Endothelial cell of umbilical vein (primary cell): ENCODE measurements at regions of chr12 and their contacts with region 1.

Region 1: DNA sequence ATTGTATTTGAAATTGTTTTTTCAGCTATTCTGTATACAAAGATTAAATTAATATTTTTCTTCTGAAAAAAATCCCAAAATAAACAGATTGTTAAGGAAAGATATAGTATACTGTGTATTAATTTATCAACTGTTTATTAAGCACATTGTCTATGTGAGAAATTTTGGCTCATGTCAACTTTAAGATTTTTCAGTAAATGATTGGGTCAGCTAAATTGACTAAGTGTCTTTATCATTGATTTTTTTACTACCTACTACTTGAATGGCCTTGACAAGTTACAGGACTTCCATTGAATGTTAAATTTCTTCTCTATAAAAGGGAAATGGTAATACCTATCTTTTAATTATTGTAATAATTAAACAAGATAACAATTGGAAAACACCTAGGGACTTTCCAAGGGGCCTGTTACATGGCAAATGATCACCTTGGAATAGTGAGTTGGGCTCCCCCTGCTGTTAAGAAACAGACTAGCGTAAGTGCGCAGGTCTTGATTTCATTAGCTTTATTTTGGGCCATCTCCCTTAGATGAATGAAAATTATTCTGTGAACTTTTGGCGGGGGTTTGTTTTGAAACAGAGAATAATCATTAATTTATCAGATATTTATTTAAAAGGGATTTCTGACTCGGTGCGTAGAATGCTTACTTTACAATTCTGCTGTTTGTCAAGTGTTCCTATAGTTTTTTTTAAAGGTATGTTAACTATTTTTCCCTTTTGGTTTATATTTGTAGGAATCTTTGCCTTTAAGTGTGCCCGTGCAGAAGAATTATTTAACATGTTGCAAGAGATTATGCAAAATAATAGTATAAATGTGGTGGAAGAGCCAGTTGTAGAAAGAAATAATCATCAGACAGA is 14.5 kb upstream of the CCT2 start:
- DNase-seq: peak; percentile 70
- H3K4me3 ChIP-seq: no peak overlapping the region
- H3K27ac ChIP-seq: no peak overlapping the region
- H3K4me1 ChIP-seq: no peaks in the 10 kb centered on the region
- H3K27me3 ChIP-seq: no peaks in the 10 kb centered on the region
- CTCF ChIP-seq: peak; percentile 64 to 72
- POLR2A ChIP-seq: no peak

Region 2: DNA sequence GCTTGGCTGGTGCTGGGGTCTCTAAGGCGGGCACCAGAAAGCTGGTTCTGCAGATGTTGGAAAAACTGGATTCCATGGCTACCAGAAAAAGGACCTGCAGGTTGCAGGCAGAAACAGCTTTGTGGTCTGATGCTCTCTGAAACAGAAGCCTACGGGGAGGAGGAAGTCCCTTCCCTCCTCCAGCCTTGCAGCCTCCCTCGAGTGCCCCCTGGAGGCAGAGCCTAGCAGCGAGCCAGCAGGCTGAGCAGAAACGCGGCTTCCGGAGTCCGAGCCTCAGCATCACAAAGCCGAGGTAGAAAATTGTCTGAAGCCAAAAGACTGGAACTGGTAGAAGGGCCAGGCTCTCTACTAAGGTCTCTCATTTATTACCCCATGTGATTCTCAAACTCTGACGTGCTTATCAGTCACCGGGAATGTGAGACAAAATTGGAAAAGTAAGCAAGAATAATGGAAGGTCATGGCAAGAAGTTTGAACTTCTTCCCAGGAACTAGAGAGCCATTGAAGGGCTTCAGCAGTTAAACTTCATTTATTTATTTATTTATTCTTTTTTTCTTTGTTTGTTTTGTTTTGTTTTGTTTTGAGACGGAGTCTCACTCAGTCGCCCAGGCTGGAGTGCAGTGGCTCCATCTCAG is 413.6 kb before region 1 on chr12:
- CTCF ChIA-PET with region 1: interaction called, 13 read pairs
- POLR2A ChIA-PET with region 1: no interaction called
- dilution Hi-C with region 1: no loop called
- intact Hi-C with region 1: loop called (anchors 5 kb)
- DNase-seq: peak; percentile 67
- H3K4me3 ChIP-seq: no peak overlapping the region
- H3K27ac ChIP-seq: no peak overlapping the region
- H3K4me1 ChIP-seq: no peaks in the 10 kb centered on the region
- H3K27me3 ChIP-seq: peaks cover 1 to 2% of the 10 kb centered on the region in 2 experiments
- CTCF ChIP-seq: peak; percentile 96 to 99
- POLR2A ChIP-seq: no peak

Region 3: DNA sequence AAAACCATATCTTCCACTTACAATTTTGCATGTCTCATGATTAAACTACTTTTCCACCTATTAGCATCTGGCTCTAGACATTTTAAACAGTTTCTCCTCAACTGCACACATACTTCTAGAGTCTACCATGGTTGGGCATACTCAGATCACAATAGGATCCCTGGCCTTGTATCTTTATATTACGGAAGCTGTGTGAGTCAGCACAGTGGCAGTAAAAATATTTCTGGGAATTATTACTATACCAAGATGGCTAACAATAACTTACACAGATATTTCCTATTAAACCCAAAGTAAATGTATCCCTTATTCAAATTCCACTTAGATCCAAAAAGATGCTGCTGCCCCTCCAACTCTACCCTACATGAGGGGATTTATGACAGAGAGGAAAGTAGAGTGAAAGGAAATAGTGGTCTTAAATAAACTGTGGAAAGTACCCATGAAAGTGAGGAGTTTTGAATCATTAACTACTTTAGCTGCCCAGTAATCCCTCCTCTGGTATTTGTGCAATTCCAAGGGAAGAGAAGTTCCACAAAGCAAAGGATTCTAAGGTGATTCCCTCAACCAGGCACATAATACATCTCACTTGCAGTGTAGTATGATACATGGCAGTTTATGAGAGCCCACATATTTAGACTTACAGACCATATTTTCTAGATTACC is 345.4 kb before region 1 on chr12:
- CTCF ChIA-PET with region 1: no interaction called
- POLR2A ChIA-PET with region 1: no interaction called
- dilution Hi-C with region 1: no loop called
- intact Hi-C with region 1: no loop called
- DNase-seq: no peak
- H3K4me3 ChIP-seq: no peak overlapping the region
- H3K27ac ChIP-seq: no peak overlapping the region
- H3K4me1 ChIP-seq: no peaks in the 10 kb centered on the region
- H3K27me3 ChIP-seq: peaks cover 1 to 11% of the 10 kb centered on the region in 2 experiments
- CTCF ChIP-seq: no peak
- POLR2A ChIP-seq: no peak

Region 4: DNA sequence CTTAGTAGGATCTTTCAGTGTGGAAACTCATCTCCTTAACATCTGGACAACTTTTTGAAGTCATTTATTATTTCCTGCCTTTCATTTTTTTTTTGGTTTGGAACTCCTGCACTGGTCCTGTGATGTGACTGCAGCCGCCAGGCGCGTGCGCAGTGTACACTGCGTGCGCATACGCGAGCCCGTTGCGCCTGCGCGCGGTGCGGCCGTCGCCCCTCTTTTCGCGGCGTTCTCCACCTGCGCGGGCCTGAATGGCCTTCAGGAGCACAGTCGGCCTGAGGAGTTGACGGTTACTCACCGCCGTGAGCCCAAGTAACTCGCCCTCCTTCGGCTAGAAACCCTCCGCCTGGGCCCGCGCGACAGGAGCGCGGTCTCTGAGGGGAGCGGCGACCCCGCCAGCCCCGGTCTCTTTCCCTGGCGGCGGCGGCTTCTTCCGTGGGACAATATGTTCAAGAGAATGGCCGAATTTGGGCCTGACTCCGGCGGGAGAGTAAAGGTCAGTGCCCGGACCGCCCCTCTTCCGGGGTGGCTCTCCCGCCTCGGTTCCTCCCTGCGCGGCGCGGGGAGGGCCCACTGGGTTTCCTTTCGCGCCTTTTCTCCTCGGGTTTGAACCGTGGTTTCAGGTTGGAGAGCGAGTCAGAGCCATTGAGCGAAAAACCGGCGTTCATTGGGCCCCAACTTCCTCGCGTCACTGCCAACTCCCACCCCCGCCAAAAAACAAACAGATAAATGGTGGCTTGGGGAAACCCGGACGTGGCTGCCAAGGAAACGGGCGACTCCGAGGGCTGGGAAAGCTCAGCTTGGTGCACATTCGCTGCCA is 211.0 kb before region 1 on chr12 and contains the start of gene YEATS4:
- CTCF ChIA-PET with region 1: interaction called, 107 read pairs
- POLR2A ChIA-PET with region 1: no interaction called
- dilution Hi-C with region 1: no loop called
- intact Hi-C with region 1: loop called (anchors 1 kb)
- DNase-seq: peak; percentile 92
- H3K4me3 ChIP-seq: peak within 1 kb of the TSS; percentile 6 to 89 (median 65)
- H3K27ac ChIP-seq: peak within 1 kb of the TSS; percentile 69
- H3K4me1 ChIP-seq: peaks cover 7% of the 10 kb centered on the region
- H3K27me3 ChIP-seq: no peaks in the 10 kb centered on the region
- CTCF ChIP-seq: no peak
- POLR2A ChIP-seq: peak; percentile 68
- total RNA-seq, gene YEATS4: 16.5 and 16.7 TPM in 2 replicates

Region 5: DNA sequence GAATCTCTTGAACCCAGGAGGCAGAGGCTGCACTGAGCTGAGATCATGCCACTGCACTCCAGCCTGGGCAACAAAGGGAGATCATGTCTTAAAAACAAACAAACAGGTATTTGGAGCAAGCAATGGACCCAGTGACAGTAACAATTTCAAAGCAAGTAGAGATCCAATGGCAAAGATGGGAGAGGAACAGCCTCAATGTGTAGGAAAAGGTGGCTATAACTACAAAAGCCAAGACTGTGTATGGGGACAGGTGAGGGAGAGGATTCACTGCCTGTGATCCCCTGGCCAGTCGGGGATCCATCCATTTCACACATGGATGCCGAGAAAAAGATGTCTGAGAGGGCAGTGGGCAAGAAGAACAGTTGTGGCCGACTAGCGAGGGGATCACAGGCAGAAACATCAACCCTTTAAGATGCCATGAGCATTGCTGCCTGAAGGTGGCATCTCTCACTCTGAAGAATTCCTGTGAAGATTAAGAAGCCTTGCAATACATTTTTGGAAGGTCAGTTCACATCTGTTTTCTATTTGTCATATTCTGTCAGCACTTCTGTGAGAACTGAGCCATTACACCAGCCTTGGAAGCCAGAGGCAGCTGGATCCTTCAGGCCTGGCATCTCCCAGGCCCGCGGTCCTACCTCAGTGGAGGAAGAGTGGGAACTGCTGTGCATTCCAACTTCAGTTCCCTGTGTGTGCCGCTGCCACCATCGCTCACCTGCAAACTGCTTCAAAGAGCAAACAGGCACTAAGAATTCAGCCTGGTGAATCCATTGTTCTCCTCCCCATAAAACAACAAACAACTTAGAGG is 155.1 kb before region 1 on chr12:
- CTCF ChIA-PET with region 1: interaction called, 69 read pairs
- POLR2A ChIA-PET with region 1: no interaction called
- dilution Hi-C with region 1: no loop called
- intact Hi-C with region 1: loop called (anchors 1 kb)
- DNase-seq: peak; percentile 70
- H3K4me3 ChIP-seq: no peak overlapping the region
- H3K27ac ChIP-seq: no peak overlapping the region
- H3K4me1 ChIP-seq: no peaks in the 10 kb centered on the region
- H3K27me3 ChIP-seq: no peaks in the 10 kb centered on the region
- CTCF ChIP-seq: peak; percentile 66 to 71
- POLR2A ChIP-seq: no peak

Region 6: DNA sequence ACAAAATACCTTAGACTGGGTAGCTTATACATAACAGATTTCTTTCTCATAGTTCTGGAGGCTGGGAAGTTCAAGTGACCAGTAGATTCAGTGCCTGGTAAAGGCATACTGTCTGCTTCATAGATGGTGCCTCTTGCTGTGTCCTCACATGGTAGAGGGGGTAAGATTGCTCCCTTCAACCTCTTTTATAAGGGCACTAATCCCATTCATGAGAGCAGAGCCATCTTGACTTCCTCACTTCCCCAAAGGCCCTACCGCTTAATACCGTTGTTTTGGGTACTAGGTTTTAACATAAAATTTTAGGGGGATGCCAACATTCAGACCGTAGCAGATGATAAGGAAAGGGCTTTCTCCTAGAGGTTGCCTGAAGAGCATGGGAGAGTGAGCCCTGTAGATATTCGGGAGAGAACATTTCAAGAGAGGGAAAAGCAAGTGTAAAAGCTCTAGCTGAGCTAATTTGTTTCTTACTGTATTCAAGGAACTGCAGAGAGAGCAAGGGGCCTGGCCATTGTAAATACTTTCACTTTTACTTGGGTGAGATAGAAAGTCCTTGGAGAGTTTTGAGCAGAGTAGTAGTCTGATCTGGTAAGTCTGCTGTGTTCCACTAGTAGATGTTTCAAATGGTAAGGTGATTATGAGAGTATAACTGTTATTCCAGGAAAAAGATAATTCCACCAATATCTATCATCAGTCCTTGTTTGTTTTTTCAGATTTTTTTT is 73.3 kb before region 1 on chr12:
- CTCF ChIA-PET with region 1: interaction called, 12 read pairs
- POLR2A ChIA-PET with region 1: no interaction called
- dilution Hi-C with region 1: no loop called
- intact Hi-C with region 1: no loop called
- DNase-seq: no peak
- H3K4me3 ChIP-seq: no peak overlapping the region
- H3K27ac ChIP-seq: no peak overlapping the region
- H3K4me1 ChIP-seq: no peaks in the 10 kb centered on the region
- H3K27me3 ChIP-seq: no peaks in the 10 kb centered on the region
- CTCF ChIP-seq: no peak
- POLR2A ChIP-seq: no peak

Region 7: GRCh38 chr12:69553627-69554248 is 17.0 kb before region 1 on chr12:
- CTCF ChIA-PET with region 1: interaction called, 22 read pairs
- POLR2A ChIA-PET with region 1: interaction called, 3 read pairs
- dilution Hi-C with region 1: no loop called
- intact Hi-C with region 1: no loop called
- DNase-seq: peak; percentile 60
- H3K4me3 ChIP-seq: no peak overlapping the region
- H3K27ac ChIP-seq: no peak overlapping the region
- H3K4me1 ChIP-seq: no peaks in the 10 kb centered on the region
- H3K27me3 ChIP-seq: no peaks in the 10 kb centered on the region
- CTCF ChIP-seq: no peak
- POLR2A ChIP-seq: no peak